Activated CD4-positive, alpha-beta memory T cell treated with anti-CD3 and anti-CD28 coated beads for 36 hours (primary cell): ENCODE measurements at regions of chr12 and their contacts with region 1.

Region 1: DNA sequence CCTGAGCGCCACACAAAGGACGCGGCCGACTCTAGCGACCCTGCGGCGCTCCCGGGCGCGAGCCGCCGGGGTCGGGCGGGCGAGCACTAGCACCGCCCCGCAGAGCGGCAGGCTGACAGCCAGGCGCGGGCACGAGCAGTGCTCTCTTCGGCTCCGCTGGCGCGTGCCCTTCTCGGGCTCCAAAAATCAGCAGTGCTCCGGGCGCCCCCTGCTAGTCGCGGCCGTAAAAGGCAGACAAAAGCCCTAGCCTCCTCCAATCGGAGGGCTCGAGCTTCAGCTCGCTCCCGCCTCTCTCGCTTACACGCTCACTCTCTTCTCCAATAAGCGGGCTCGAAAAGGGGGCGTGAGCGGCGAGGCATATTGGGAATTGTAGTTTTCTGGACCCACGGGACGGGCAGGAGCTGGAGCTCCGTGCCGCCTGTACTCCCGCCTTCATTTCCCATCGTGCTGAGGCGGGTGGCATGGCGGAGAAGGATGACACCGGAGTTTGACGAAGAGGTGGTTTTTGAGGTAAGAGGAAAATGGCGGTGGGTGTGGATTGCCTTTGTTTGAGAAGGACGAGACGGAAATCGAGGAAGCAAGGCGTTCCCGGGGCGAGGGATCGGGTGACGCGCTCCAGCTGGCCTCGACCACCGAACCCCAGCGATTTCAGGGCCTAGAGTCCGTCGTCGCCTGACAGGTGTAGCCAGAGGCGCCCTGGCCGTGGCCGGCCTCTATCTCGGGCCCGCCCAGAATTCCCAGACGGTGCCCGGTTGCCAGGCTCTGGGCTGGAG is at the starts of genes FGD6 and VEZT:
- DNase-seq: peak; percentile 99
- H3K4me3 Mint-ChIP-seq: peak within 1 kb of the TSS; percentile 89
- H3K27ac Mint-ChIP-seq: peak within 1 kb of the TSS; percentile 95
- H3K4me1 Mint-ChIP-seq: peaks cover 35% of the 10 kb centered on the region
- H3K27me3 Mint-ChIP-seq: no peaks in the 10 kb centered on the region
- total RNA-seq, gene FGD6: 0.78 to 1.1 TPM
- total RNA-seq, gene VEZT: 50.7 to 54.4 TPM

Region 2: DNA sequence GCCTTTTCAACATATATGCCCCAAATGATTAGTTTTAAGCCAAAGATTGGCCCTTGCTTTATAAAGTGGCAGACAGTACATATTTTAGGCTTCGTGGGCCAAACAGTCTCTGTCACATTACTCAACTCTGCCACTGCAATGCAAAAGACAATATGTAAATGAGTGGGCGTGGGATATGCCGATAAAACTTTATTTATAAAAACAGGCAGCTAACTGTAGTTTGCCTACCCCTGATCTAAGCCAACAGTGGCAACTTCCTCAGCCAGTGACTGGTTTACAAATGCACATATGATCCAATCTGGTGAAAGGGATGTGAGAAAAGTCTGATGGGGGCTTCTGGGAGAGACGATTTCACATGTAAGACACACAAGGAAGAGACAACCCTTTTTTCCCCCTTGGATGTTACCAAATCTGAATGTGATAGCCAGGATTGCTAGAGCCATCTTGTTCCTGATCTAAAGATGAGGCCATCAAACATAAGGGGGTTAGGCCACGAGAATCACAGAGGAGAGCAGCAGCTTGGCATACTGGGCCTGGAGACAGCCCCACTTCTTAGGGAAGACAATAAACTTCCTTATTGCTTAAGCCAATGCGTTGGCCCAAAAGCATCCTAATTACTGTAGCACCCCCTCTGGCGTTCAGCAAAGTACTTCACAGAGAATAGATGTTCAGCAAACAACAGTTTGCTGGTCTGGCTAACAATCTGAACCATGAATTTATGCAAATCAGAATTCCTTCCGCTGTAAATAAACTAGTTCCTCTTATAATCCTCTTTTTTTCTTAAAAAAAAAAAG is 492.0 kb before region 1 on chr12:
- CTCF ChIA-PET with region 1: no interaction called
- POLR2A ChIA-PET with region 1: no interaction called
- intact Hi-C with region 1: no loop called
- DNase-seq: no peak
- H3K4me3 Mint-ChIP-seq: no peak overlapping the region
- H3K27ac Mint-ChIP-seq: no peak overlapping the region
- H3K4me1 Mint-ChIP-seq: no peaks in the 10 kb centered on the region
- H3K27me3 Mint-ChIP-seq: peaks cover 3% of the 10 kb centered on the region

Region 3: GRCh38 chr12:95003213-95003920 is 214.2 kb before region 1 on chr12 and contains the start of gene NDUFA12:
- CTCF ChIA-PET with region 1: no interaction called
- POLR2A ChIA-PET with region 1: no interaction called
- intact Hi-C with region 1: loop called (anchors 1 kb)
- DNase-seq: peak; percentile 97
- H3K4me3 Mint-ChIP-seq: peak within 1 kb of the TSS; percentile 91
- H3K27ac Mint-ChIP-seq: peak within 1 kb of the TSS; percentile 87
- H3K4me1 Mint-ChIP-seq: peaks cover 40% of the 10 kb centered on the region
- H3K27me3 Mint-ChIP-seq: no peaks in the 10 kb centered on the region
- total RNA-seq, gene NDUFA12: 150 to 156 TPM

Region 4: GRCh38 chr12:95088379-95088778 is 129.2 kb before region 1 on chr12:
- CTCF ChIA-PET with region 1: no interaction called
- POLR2A ChIA-PET with region 1: no interaction called
- intact Hi-C with region 1: no loop called
- DNase-seq: no peak
- H3K4me3 Mint-ChIP-seq: no peak overlapping the region
- H3K27ac Mint-ChIP-seq: no peak overlapping the region
- H3K4me1 Mint-ChIP-seq: peaks cover 8% of the 10 kb centered on the region
- H3K27me3 Mint-ChIP-seq: no peaks in the 10 kb centered on the region

Region 5: GRCh38 chr12:95102916-95103671 is 114.5 kb before region 1 on chr12:
- CTCF ChIA-PET with region 1: no interaction called
- POLR2A ChIA-PET with region 1: interaction called, 3 read pairs
- intact Hi-C with region 1: loop called (anchors 1 kb)
- DNase-seq: peak; percentile 68
- H3K4me3 Mint-ChIP-seq: no peak overlapping the region
- H3K27ac Mint-ChIP-seq: peak overlapping the region; percentile 63
- H3K4me1 Mint-ChIP-seq: peaks cover 19% of the 10 kb centered on the region
- H3K27me3 Mint-ChIP-seq: no peaks in the 10 kb centered on the region

Region 6: GRCh38 chr12:95286713-95287112 is 69.2 kb after region 1 on chr12:
- CTCF ChIA-PET with region 1: no interaction called
- POLR2A ChIA-PET with region 1: no interaction called
- intact Hi-C with region 1: no loop called
- DNase-seq: no peak
- H3K4me3 Mint-ChIP-seq: no peak overlapping the region
- H3K27ac Mint-ChIP-seq: no peak overlapping the region
- H3K4me1 Mint-ChIP-seq: no peaks in the 10 kb centered on the region
- H3K27me3 Mint-ChIP-seq: no peaks in the 10 kb centered on the region

Region 7: DNA sequence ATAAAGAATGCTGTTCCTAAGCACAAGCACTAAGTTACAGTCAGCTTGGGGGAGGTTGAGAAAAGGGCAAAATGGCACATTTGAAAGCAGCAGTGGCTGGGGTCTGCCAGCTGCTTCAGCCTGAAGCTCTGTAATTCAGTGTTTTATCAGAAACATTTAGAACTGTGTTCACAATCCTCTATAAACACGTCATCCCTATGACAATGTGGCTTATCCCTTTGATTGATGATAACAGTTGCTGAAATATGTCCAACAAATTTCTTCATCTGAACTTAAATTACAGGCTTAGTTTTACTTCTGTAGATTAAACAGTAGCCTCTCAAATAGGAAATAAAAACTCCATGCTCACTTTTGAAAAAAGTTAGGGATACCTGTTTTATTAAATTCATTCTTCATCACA is 108.9 kb after region 1 on chr12:
- CTCF ChIA-PET with region 1: no interaction called
- POLR2A ChIA-PET with region 1: no interaction called
- intact Hi-C with region 1: no loop called
- DNase-seq: no peak
- H3K4me3 Mint-ChIP-seq: no peak overlapping the region
- H3K27ac Mint-ChIP-seq: no peak overlapping the region
- H3K4me1 Mint-ChIP-seq: no peaks in the 10 kb centered on the region
- H3K27me3 Mint-ChIP-seq: no peaks in the 10 kb centered on the region

Region 8: DNA sequence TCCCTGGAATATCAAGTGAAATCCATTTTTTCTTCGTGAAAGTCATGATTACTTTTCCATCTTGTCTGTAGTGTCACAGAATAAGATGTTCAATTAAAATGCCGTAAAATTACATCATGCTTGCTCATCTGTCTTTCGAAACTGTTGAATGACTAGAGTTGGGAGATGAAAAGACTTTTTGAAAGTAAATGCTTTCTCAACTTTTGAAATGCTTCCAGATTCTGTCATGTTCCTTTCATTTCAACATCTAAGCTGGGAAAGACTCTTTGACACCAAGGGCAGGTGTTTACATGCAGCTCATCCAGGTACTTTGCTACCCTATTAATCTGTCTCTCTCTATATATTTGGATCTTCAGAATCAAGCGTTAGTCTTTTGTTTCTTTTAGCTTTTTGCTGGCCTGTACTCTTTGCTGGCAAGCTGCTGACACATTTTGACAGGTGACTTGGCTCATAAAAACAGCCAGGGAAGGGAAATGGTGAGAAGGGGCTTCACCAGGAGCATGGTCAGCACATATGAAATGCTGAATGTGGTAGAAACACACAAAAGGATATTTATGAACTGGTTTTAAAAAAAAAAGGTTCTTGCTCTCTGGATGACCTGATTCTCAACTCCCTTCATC is 179.4 kb after region 1 on chr12:
- CTCF ChIA-PET with region 1: no interaction called
- POLR2A ChIA-PET with region 1: interaction called, 3 read pairs
- intact Hi-C with region 1: loop called (anchors 1 kb)
- DNase-seq: peak; percentile 16
- H3K4me3 Mint-ChIP-seq: no peak overlapping the region
- H3K27ac Mint-ChIP-seq: peak overlapping the region; percentile 57
- H3K4me1 Mint-ChIP-seq: peaks cover 14% of the 10 kb centered on the region
- H3K27me3 Mint-ChIP-seq: peaks cover 29% of the 10 kb centered on the region

Region 9: GRCh38 chr12:95532851-95533250 is 315.3 kb after region 1 on chr12:
- CTCF ChIA-PET with region 1: interaction called, 6 read pairs
- POLR2A ChIA-PET with region 1: no interaction called
- intact Hi-C with region 1: loop called (anchors 2 kb)
- DNase-seq: peak; percentile 33
- H3K4me3 Mint-ChIP-seq: no peak overlapping the region
- H3K27ac Mint-ChIP-seq: no peak overlapping the region
- H3K4me1 Mint-ChIP-seq: peaks cover 8% of the 10 kb centered on the region
- H3K27me3 Mint-ChIP-seq: no peaks in the 10 kb centered on the region

Region 10: GRCh38 chr12:95858479-95859343 is 641.1 kb after region 1 on chr12 and contains the start of gene SNRPF:
- CTCF ChIA-PET with region 1: no interaction called
- POLR2A ChIA-PET with region 1: no interaction called
- intact Hi-C with region 1: loop called (anchors 5 kb)
- DNase-seq: peak; percentile 97
- H3K4me3 Mint-ChIP-seq: no peak within 1 kb of the TSS
- H3K27ac Mint-ChIP-seq: no peak within 1 kb of the TSS
- H3K4me1 Mint-ChIP-seq: peaks cover 38% of the 10 kb centered on the region
- H3K27me3 Mint-ChIP-seq: peaks cover 5% of the 10 kb centered on the region
- total RNA-seq, gene SNRPF: 45.4 to 46.0 TPM